ENCODE measurements at regions of chr6 and their contacts with region 1.

Region 1: DNA sequence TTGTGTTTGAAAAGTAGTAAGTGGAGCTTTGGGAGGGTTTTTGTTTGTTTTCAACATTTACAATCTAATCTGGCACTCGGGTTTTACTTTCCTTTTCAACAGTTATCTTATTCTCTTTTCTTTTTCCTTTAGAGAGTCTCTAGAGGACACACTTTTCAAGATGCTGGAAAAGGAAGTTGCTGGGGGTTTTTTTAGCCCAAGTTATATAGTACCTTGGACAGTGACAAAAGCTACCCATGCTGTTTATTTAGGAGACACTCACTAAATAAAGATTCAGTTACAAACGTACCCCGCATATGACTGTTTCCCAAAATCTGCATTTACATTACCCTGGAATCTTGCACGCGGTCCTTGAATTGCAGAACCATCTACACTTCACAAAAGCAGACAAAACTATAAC is 78.8 kb downstream of the MAP7 start:
- DNase-seq: no peak
- H3K4me3 ChIP-seq: peak overlapping the region in 32 of 59 donors; percentile 1 to 60 (median 17)
- H3K27ac ChIP-seq: peak overlapping the region; percentile 7 to 100 (median 96)
- H3K27me3 ChIP-seq: no peaks in the 10 kb centered on the region
- CTCF ChIP-seq: no peak

Region 2: DNA sequence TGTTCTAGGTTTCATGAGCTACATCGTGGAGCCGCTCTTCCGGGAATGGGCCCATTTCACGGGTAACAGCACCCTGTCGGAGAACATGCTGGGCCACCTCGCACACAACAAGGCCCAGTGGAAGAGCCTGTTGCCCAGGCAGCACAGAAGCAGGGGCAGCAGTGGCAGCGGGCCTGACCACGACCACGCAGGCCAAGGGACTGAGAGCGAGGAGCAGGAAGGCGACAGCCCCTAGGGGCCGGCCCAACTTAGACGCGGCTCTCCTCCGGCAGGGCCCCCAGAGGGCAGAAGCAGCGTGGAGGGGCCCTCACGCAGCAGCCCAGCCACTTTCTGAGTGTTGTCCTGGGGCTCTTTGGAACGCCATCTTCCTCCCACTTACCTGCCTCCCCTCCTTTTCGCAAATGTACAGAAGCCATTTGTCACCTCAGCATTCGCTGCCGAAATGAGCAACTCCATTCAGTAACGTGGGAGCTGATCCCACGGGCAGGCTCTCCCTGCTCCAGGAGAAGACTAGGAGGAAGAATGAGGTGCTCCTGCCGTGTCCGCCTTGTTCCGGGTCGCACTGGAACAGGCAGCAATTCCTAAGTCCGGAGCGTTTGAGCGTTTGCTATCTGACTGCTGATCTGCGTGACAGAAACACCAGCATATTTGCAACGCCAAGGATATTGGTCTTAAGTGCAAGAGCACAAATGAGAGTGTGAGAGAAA is 279.6 kb before region 1 on chr6:
- intact Hi-C with region 1: no loop called
- DNase-seq: no peak
- H3K4me3 ChIP-seq: no peak overlapping the region
- H3K27ac ChIP-seq: no peak overlapping the region
- H3K27me3 ChIP-seq: no peaks in the 10 kb centered on the region
- CTCF ChIP-seq: no peak

Region 3: GRCh38 chr6:136435101-136435500 is 36.3 kb before region 1 on chr6:
- intact Hi-C with region 1: loop called in 1 of 2 experiments (anchors 2 kb)
- DNase-seq: no peak
- H3K4me3 ChIP-seq: peak overlapping the region in 36 of 59 donors; percentile 0 to 44 (median 19)
- H3K27ac ChIP-seq: peak overlapping the region; percentile 12 to 98 (median 91)
- H3K27me3 ChIP-seq: no peaks in the 10 kb centered on the region
- CTCF ChIP-seq: peak in 1 of 56 donors; percentile 1

Region 4: GRCh38 chr6:136508701-136509392 is 37.5 kb after region 1 on chr6:
- intact Hi-C with region 1: loop called in 1 of 2 experiments (anchors 5 kb)
- DNase-seq: no peak
- H3K4me3 ChIP-seq: no peak overlapping the region
- H3K27ac ChIP-seq: peak overlapping the region in 19 of 59 donors; percentile 0 to 99 (median 18)
- H3K27me3 ChIP-seq: no peaks in the 10 kb centered on the region
- CTCF ChIP-seq: no peak

Region 5: GRCh38 chr6:136526196-136526930 is 55.0 kb after region 1 on chr6:
- intact Hi-C with region 1: loop called (anchors 2 kb)
- DNase-seq: peak; percentile 62 to 91 (median 87)
- H3K4me3 ChIP-seq: peak overlapping the region; percentile 35 to 81 (median 66)
- H3K27ac ChIP-seq: peak overlapping the region; percentile 66 to 99 (median 96)
- H3K27me3 ChIP-seq: no peaks in the 10 kb centered on the region
- CTCF ChIP-seq: peak in 48 of 56 donors; percentile 4 to 64 (median 46)

Measured in dorsolateral prefrontal cortex (tissue), 120 donors.